HepG2 (cell line): ENCODE measurements at regions of chr3 and their contacts with region 1.

Region 1: DNA sequence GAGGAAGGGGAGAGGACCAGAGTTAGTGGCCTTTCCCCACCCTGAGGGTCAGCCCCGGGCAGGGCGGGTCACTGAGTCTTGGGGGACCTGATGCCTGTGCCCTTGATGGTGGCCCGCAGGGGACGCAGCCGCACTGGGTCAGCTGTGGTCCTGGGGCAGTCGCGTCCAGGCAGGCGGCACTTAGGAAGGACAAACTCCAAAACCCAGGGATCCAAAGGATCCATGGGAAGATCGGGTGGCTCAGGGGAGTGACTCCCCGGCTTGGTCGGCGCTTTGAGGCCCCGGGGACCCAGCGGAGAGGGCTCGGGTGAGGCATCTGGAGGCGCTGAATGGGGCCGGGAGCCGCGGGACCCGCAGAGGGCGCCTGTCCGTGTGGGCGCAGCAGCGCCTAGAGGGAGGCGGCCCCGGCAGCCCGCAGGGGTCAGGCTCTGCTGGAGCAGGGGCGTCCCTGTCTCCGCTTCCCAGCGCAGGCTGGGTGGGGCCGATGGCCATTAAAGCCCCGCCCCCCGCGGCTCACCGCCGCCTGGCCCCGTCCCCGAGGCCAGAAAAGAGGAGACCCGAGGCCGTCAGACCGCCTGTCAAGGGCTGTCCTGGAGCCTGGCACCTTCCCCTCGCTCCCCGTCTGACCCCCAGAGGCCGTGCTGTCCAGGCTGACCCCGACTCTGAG is 17.5 kb downstream of the CIDEC start:
- DNase-seq: peak; percentile 74
- ATAC-seq: peak; percentile 93
- H3K4me3 ChIP-seq: peak overlapping the region; percentile 43 to 77 (median 72); a peak in 5 of 6 replicates
- H3K27ac ChIP-seq: peak overlapping the region; percentile 22
- H3K4me1 ChIP-seq: peaks cover 45% of the 10 kb centered on the region
- H3K27me3 ChIP-seq: peaks cover 0 to 12% of the 10 kb centered on the region in 2 experiments; a peak in 2 of 5 replicates
- CTCF ChIP-seq: peak; percentile 90
- EP300 ChIP-seq: no peak
- POLR2A ChIP-seq: peak in 1 of 2 experiments; percentile 80; a peak in 3 of 4 replicates
- RAD21 ChIP-seq: peak; percentile 98

Region 2: DNA sequence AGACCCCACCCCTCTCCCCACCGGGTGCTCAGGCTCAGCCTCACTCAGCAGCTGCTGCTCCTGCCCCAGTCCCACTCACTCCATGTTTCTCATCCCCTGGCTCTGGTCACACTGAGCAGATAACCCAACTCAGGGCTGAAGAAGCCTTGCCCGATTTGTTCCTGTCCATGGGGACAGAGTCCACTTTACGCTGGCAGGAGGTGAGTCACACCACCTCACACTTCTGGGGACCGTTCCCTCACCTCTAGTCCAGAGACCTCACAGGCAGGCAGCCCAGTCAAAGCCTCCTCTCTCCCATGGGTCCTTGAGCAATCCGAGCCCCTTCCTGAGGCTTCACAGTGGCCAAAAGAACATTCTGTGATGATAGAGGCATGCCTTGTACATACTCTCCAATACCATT is 16.2 kb after region 1 on chr3:
- CTCF ChIA-PET with region 1: no interaction called
- POLR2A ChIA-PET with region 1: interaction called, 20 read pairs
- in situ Hi-C with region 1: no loop called
- intact Hi-C with region 1: loop called (anchors 2 kb)
- DNase-seq: peak; percentile 84
- ATAC-seq: peak; percentile 98
- H3K4me3 ChIP-seq: peak overlapping the region in 1 of 3 experiments; percentile 51; a peak in 2 of 6 replicates
- H3K27ac ChIP-seq: peak overlapping the region; percentile 49
- H3K4me1 ChIP-seq: peaks cover 34% of the 10 kb centered on the region
- H3K27me3 ChIP-seq: no peaks in the 10 kb centered on the region
- CTCF ChIP-seq: 0 out of 2 replicates have a peak, but pooled peaks have one; percentile 3
- EP300 ChIP-seq: peak in 1 of 2 experiments; percentile 38; a peak in 1 of 4 replicates
- POLR2A ChIP-seq: peak; percentile 62 to 75; a peak in 3 of 4 replicates
- RAD21 ChIP-seq: no peak

Region 3: DNA sequence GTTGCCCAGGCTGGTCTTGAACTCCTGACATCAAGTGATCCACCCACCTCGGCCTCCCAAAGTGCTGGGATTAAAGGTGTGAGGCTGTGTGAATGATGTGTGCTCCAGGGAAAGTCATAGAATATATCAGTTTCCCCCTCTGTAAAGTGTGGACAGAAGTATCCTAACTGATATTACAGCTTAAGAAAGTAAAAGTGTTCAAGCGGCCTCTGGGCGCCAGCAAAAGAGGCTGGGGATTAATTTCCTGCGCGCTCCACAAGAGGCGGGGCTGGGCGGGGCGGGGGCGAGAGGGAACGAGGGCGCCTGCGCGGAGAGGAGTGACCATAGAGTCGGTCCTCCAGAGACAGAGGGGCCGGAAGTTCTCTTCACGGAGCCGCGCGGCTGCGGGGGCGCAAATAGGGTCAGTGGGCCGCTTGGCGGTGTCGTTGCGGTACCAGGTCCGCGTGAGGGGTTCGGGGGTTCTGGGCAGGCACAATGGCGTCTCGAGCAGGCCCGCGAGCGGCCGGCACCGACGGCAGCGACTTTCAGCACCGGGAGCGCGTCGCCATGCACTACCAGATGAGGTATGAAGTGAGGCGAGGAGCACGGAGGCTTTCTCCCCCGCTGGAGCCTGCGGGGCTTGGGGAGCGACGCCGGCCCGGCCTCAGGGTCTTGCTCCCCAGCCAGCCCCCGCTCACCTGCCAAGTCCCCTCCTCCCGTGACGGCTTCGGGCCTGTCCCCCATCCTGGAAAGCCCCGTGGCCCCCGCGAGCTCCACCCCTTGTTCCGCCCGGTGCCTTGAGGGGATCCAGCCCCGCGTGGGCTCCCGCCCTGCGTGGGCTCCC is 27.9 kb after region 1 on chr3 and contains the start of gene JAGN1:
- CTCF ChIA-PET with region 1: interaction called, 4 read pairs
- POLR2A ChIA-PET with region 1: interaction called, 35 read pairs
- in situ Hi-C with region 1: loop called (anchors 5 kb)
- intact Hi-C with region 1: loop called (anchors 1 kb)
- DNase-seq: peak; percentile 77
- ATAC-seq: peak; percentile 85
- H3K4me3 ChIP-seq: peak within 1 kb of the TSS; percentile 85 to 99 (median 98)
- H3K27ac ChIP-seq: peak within 1 kb of the TSS; percentile 92
- H3K4me1 ChIP-seq: peaks cover 50% of the 10 kb centered on the region
- H3K27me3 ChIP-seq: no peaks in the 10 kb centered on the region; a peak in 1 of 5 replicates
- CTCF ChIP-seq: peak; percentile 57
- EP300 ChIP-seq: peak in 1 of 2 experiments; percentile 46; a peak in 2 of 4 replicates
- POLR2A ChIP-seq: peak; percentile 89 to 97
- RAD21 ChIP-seq: peak; percentile 71
- total RNA-seq, gene JAGN1: 40.9 and 50.9 TPM in 2 replicates

Region 4: GRCh38 chr3:9897408-9898372 is 35.2 kb after region 1 on chr3:
- CTCF ChIA-PET with region 1: no interaction called
- POLR2A ChIA-PET with region 1: interaction called, 153 read pairs
- in situ Hi-C with region 1: loop called (anchors 5 kb)
- intact Hi-C with region 1: no loop called
- DNase-seq: peak; percentile 98
- ATAC-seq: peak; percentile 80
- H3K4me3 ChIP-seq: peak overlapping the region in 2 of 3 experiments; percentile 34 to 67; a peak in 3 of 6 replicates
- H3K27ac ChIP-seq: peak overlapping the region; percentile 100
- H3K4me1 ChIP-seq: peaks cover 79% of the 10 kb centered on the region
- H3K27me3 ChIP-seq: no peaks in the 10 kb centered on the region; a peak in 1 of 5 replicates
- CTCF ChIP-seq: no peak
- EP300 ChIP-seq: peak in 1 of 2 experiments; percentile 48; a peak in 3 of 4 replicates
- POLR2A ChIP-seq: peak; percentile 66 to 88
- RAD21 ChIP-seq: no peak

Region 5: GRCh38 chr3:9915254-9916141 is 53.0 kb after region 1 on chr3:
- CTCF ChIA-PET with region 1: interaction called, 14 read pairs
- POLR2A ChIA-PET with region 1: interaction called, 39 read pairs
- in situ Hi-C with region 1: no loop called
- intact Hi-C with region 1: loop called (anchors 1 kb)
- DNase-seq: peak; percentile 36
- ATAC-seq: peak; percentile 52
- H3K4me3 ChIP-seq: peak overlapping the region; percentile 55 to 86 (median 83); a peak in 5 of 6 replicates
- H3K27ac ChIP-seq: peak overlapping the region; percentile 90
- H3K4me1 ChIP-seq: peaks cover 38% of the 10 kb centered on the region
- H3K27me3 ChIP-seq: no peaks in the 10 kb centered on the region
- CTCF ChIP-seq: peak; percentile 53; the same call in 1 of the 2 replicates
- EP300 ChIP-seq: no peak
- POLR2A ChIP-seq: no peak; a peak in 1 of 4 replicates
- RAD21 ChIP-seq: peak; percentile 89

Region 6: DNA sequence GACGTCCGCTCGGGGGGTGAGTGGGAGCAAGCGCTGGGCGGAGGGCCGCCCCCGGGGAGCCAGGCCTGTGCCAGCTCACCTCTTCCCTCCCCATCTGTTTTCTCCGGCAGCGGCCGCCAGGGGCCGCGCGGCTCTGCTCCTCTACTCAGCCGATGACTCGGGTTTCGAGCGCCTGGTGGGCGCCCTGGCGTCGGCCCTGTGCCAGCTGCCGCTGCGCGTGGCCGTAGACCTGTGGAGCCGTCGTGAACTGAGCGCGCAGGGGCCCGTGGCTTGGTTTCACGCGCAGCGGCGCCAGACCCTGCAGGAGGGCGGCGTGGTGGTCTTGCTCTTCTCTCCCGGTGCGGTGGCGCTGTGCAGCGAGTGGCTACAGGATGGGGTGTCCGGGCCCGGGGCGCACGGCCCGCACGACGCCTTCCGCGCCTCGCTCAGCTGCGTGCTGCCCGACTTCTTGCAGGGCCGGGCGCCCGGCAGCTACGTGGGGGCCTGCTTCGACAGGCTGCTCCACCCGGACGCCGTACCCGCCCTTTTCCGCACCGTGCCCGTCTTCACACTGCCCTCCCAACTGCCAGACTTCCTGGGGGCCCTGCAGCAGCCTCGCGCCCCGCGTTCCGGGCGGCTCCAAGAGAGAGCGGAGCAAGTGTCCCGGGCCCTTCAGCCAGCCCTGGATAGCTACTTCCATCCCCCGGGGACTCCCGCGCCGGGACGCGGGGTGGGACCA is 70.5 kb after region 1 on chr3:
- CTCF ChIA-PET with region 1: interaction called, 4 read pairs
- POLR2A ChIA-PET with region 1: interaction called, 23 read pairs
- in situ Hi-C with region 1: no loop called
- intact Hi-C with region 1: loop called (anchors 1 kb)
- DNase-seq: peak; percentile 70
- ATAC-seq: peak; percentile 88
- H3K4me3 ChIP-seq: peak overlapping the region; percentile 64 to 82 (median 80); a peak in 5 of 6 replicates
- H3K27ac ChIP-seq: peak overlapping the region; percentile 92
- H3K4me1 ChIP-seq: peaks cover 40% of the 10 kb centered on the region
- H3K27me3 ChIP-seq: no peaks in the 10 kb centered on the region
- CTCF ChIP-seq: peak; percentile 90
- EP300 ChIP-seq: no peak
- POLR2A ChIP-seq: 0 out of 4 replicates have a peak, but pooled peaks of 1 of the 2 experiments have one; percentile 59
- RAD21 ChIP-seq: peak; percentile 84